ENCODE measurements at regions of chr12 and their contacts with region 1.

Region 1: GRCh38 chr12:26286186-26286585 is 90.8 kb downstream of the SSPN start:
- DNase-seq: no peak
- ATAC-seq: no peak
- H3K4me3 ChIP-seq: no peak overlapping the region
- H3K4me3 Mint-ChIP-seq: no peak overlapping the region
- H3K27ac ChIP-seq: no peak overlapping the region
- H3K27ac Mint-ChIP-seq: no peak overlapping the region
- H3K4me1 ChIP-seq: no peaks in the 10 kb centered on the region
- H3K4me1 Mint-ChIP-seq: no peaks in the 10 kb centered on the region
- H3K27me3 ChIP-seq: no peaks in the 10 kb centered on the region
- H3K27me3 Mint-ChIP-seq: no peaks in the 10 kb centered on the region
- CTCF ChIP-seq: no peak

Region 2: GRCh38 chr12:26162905-26163304 is 123.3 kb before region 1 on chr12:
- CTCF ChIA-PET with region 1: no interaction called
- POLR2A ChIA-PET with region 1: no interaction called
- intact Hi-C with region 1: no loop called
- DNase-seq: no peak
- ATAC-seq: no peak
- H3K4me3 ChIP-seq: no peak overlapping the region
- H3K4me3 Mint-ChIP-seq: no peak overlapping the region
- H3K27ac ChIP-seq: no peak overlapping the region
- H3K27ac Mint-ChIP-seq: no peak overlapping the region
- H3K4me1 ChIP-seq: no peaks in the 10 kb centered on the region
- H3K4me1 Mint-ChIP-seq: no peaks in the 10 kb centered on the region
- H3K27me3 ChIP-seq: no peaks in the 10 kb centered on the region
- H3K27me3 Mint-ChIP-seq: peaks cover 41% of the 10 kb centered on the region
- CTCF ChIP-seq: no peak

Region 3: GRCh38 chr12:26219736-26220135 is 66.5 kb before region 1 on chr12:
- CTCF ChIA-PET with region 1: no interaction called
- POLR2A ChIA-PET with region 1: no interaction called
- intact Hi-C with region 1: no loop called
- DNase-seq: no peak
- ATAC-seq: no peak
- H3K4me3 ChIP-seq: no peak overlapping the region
- H3K4me3 Mint-ChIP-seq: no peak overlapping the region
- H3K27ac ChIP-seq: no peak overlapping the region
- H3K27ac Mint-ChIP-seq: no peak overlapping the region
- H3K4me1 ChIP-seq: no peaks in the 10 kb centered on the region
- H3K4me1 Mint-ChIP-seq: no peaks in the 10 kb centered on the region
- H3K27me3 ChIP-seq: peaks cover 0 to 6% of the 10 kb centered on the region in 2 experiments
- H3K27me3 Mint-ChIP-seq: peaks cover 18% of the 10 kb centered on the region
- CTCF ChIP-seq: no peak

Region 4: DNA sequence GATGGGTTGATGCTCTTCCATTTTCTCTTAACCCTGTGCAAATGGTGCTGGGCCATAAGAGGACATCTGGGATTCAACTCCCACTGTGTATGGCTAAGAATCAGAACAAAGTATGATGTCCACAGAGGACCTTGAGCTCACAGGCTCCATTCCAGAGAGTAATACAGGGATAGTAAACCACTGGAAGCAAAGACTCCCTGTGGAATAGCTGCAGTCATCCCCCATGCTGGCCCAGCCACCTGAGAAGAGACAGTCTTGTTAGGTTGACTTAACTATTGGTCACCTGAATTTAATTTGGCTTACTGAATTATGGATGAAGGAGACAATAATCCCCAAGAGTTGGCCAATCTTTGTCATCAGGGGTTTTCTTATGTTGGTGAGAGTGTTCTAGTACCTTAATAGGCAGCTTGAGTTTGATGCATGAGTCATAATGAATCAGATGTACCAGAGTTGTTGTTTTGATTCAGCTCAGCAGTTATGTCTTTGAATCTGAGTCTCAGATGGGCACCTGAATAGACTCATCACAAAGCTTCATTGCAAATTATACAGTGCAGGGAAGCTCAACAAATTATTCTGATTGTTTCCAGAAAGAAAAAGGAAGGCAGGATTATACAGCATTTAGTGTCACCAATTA is 31.9 kb after region 1 on chr12:
- CTCF ChIA-PET with region 1: no interaction called
- POLR2A ChIA-PET with region 1: no interaction called
- intact Hi-C with region 1: loop called in 1 of 2 experiments (anchors 1 kb)
- DNase-seq: no peak
- ATAC-seq: no peak
- H3K4me3 ChIP-seq: no peak overlapping the region
- H3K4me3 Mint-ChIP-seq: no peak overlapping the region
- H3K27ac ChIP-seq: no peak overlapping the region
- H3K27ac Mint-ChIP-seq: no peak overlapping the region
- H3K4me1 ChIP-seq: no peaks in the 10 kb centered on the region
- H3K4me1 Mint-ChIP-seq: no peaks in the 10 kb centered on the region
- H3K27me3 ChIP-seq: peaks cover 0 to 3% of the 10 kb centered on the region in 2 experiments
- H3K27me3 Mint-ChIP-seq: peaks cover 10% of the 10 kb centered on the region
- CTCF ChIP-seq: no peak

Measured in CD4-positive, alpha-beta T cell (primary cell).